HEK293 (cell line): ENCODE measurements at regions of chr15 and their contacts with region 1.

Region 1: DNA sequence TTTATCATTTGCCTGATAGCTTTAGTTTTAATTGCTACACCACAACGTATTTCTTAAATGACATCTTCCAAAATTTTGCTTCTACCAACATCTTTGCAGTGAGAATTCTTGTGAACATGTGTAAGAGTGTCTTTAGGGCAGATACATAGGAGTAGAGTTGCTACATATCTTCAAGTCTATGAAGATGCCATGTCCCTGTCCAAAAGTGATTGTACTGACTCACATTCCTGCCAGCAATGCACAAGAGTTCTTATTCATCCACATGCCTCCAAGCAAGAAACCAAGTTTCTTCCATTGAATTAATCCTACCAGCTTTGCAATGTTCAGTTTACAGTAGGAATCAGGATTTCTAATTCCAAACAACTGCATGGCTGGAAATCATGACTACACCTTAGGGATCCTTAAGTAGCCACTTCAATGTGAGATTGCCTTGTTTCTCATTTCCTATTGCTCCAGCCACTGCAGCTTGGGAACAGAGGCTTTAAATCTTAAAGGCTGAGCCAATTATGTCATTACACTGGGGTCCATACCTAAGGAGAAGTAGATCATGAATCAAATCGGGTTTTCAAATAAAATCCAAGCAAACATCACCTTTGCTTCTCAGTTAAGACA is 44.5 kb downstream of the BCL2L10 start:
- H3K4me3 ChIP-seq: no peak overlapping the region
- H3K27ac ChIP-seq: no peak overlapping the region
- H3K4me1 ChIP-seq: peaks cover 3% of the 10 kb centered on the region; the same call in 1 of the 2 replicates
- CTCF ChIP-seq: no peak

Region 2: GRCh38 chr15:52078876-52079700 is 11.0 kb after region 1 on chr15:
- CTCF ChIA-PET with region 1: interaction called, 22 read pairs
- POLR2A ChIA-PET with region 1: no interaction called
- H3K4me3 ChIP-seq: no peak overlapping the region
- H3K27ac ChIP-seq: no peak overlapping the region
- H3K4me1 ChIP-seq: no peaks in the 10 kb centered on the region
- CTCF ChIP-seq: peak; percentile 40